ENCODE measurements at regions of chr1 and their contacts with region 1.

Region 1: DNA sequence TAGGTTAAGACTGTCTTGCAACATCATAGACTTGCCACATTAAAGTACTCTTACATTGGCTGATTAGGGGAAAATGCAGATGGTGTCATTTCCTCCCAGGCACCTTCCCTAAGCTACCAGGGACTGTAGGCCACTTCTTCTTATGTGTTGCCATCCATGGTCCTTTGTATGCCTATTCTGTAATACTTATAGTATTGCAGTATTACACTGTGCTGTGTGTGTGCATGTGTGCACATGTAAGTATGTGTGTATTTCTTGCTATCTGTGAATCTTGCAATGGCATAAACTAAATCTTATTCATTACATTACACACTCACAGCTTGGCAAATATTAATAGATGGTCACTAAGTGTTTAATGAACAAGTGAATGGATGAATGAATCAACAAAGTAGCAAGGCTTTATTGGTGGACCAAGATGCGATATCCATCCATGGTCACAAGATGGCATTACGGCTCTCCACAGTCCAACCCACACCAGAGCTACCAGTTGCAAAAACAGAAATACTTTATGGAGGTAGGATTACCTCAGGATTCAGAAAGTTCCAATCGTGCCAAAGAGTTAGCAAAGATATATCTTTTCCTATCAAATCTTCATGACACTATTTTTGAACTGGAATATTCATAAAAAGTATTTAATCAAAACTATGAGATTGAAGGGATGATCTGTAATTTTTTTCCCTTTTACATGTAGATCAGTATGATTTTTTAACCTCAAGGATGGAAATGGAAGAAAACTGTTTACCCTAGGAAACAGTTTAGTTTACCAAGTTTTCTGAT is 160.2 kb downstream of the DENND1B start:
- DNase-seq: no peak
- H3K4me3 ChIP-seq: no peak overlapping the region
- H3K27ac ChIP-seq: no peak overlapping the region
- H3K4me1 ChIP-seq: no peaks in the 10 kb centered on the region
- H3K27me3 ChIP-seq: no peaks in the 10 kb centered on the region
- CTCF ChIP-seq: peak in 3 of 4 experiments; percentile 38 to 50 (median 47)
- POLR2A ChIP-seq: no peak

Region 2: GRCh38 chr1:197486946-197487345 is 128.2 kb before region 1 on chr1:
- intact Hi-C with region 1: no loop called
- DNase-seq: no peak
- H3K4me3 ChIP-seq: no peak overlapping the region
- H3K27ac ChIP-seq: no peak overlapping the region
- H3K4me1 ChIP-seq: no peaks in the 10 kb centered on the region
- H3K27me3 ChIP-seq: no peaks in the 10 kb centered on the region
- CTCF ChIP-seq: no peak
- POLR2A ChIP-seq: no peak

Region 3: DNA sequence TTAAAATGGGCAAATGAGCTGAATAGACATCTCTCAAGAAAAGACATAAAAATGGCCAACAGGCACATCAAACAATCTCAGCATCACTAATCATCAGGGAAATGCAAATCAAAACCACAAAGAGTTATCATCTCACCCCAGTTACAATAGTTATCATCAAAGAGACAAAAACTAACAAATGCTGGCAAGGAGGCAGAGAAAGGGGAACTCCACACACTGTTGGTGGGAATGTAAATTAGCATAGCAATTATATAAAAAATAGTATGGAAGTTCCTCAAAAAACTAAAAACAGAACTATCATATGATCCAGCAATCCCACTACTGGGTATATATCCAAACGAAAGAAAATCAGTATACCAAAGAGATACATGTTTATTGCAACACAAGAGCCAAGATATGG is 91.5 kb after region 1 on chr1:
- intact Hi-C with region 1: no loop called
- DNase-seq: no peak
- H3K4me3 ChIP-seq: no peak overlapping the region
- H3K27ac ChIP-seq: no peak overlapping the region
- H3K4me1 ChIP-seq: no peaks in the 10 kb centered on the region
- H3K27me3 ChIP-seq: no peaks in the 10 kb centered on the region
- CTCF ChIP-seq: no peak
- POLR2A ChIP-seq: no peak

Region 4: DNA sequence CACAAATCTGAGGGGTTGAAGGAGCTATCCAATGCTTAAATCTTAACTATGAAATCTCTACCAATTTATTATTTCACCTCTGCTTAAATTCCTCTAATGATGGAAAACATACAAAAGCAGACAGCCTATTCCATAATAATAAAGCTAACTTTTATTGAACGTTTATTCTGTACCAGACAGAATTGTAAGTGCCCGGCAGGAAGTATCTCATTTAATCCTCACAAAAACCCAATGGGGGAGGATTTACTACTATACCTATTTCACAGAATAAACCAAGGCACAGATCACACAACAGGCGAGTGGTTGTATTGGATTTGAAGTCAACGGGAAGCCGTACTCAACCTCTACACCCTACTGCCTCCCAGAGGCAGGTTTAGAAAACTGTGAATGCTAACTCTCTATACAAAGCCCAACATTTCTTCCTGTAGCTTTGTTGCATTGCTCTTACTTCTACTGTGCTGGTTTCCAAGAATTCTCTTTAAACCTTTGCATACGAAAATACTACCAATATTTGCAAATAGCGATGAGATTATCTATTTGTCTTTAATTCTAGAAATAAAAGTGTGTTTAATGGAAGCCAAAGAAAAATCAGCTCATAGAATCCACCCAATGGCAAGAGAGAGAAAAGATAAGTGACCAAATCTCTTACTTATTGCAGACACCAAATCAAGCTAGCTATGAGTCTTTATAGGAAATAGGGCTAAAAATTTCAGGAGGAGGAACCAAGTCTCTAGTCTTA is 253.8 kb after region 1 on chr1:
- intact Hi-C with region 1: loop called (anchors 5 kb)
- DNase-seq: peak; percentile 25
- H3K4me3 ChIP-seq: no peak overlapping the region
- H3K27ac ChIP-seq: no peak overlapping the region
- H3K4me1 ChIP-seq: no peaks in the 10 kb centered on the region
- H3K27me3 ChIP-seq: no peaks in the 10 kb centered on the region
- CTCF ChIP-seq: peak; percentile 17 to 60 (median 42)
- POLR2A ChIP-seq: no peak

Region 5: GRCh38 chr1:197924516-197925123 is 309.5 kb after region 1 on chr1:
- intact Hi-C with region 1: loop called (anchors 5 kb)
- DNase-seq: peak; percentile 39
- H3K4me3 ChIP-seq: no peak overlapping the region
- H3K27ac ChIP-seq: no peak overlapping the region
- H3K4me1 ChIP-seq: no peaks in the 10 kb centered on the region
- H3K27me3 ChIP-seq: peaks cover 26% of the 10 kb centered on the region
- CTCF ChIP-seq: peak; percentile 24 to 62 (median 54)
- POLR2A ChIP-seq: no peak

Measured in prostate gland (tissue), 2 donors.